Gastrocnemius medialis (tissue), 4 donors: ENCODE measurements at regions of chr17 and their contacts with region 1.

Region 1: GRCh38 chr17:51585514-51586104 is 325.3 kb downstream of the UTP18 start:
- DNase-seq: peak; percentile 3 to 12
- ATAC-seq: peak; percentile 39
- H3K4me3 ChIP-seq: no peak overlapping the region
- H3K27ac ChIP-seq: no peak overlapping the region
- H3K4me1 ChIP-seq: peaks cover 0 to 3% of the 10 kb centered on the region in 2 donors
- H3K27me3 ChIP-seq: no peaks in the 10 kb centered on the region
- CTCF ChIP-seq: peak; percentile 38 to 64 (median 53)
- POLR2A ChIP-seq: no peak

Region 2: GRCh38 chr17:51516924-51517323 is 68.7 kb before region 1 on chr17:
- in situ Hi-C with region 1: no loop called
- intact Hi-C with region 1: no loop called
- DNase-seq: no peak
- ATAC-seq: no peak
- H3K4me3 ChIP-seq: no peak overlapping the region
- H3K27ac ChIP-seq: no peak overlapping the region
- H3K4me1 ChIP-seq: no peaks in the 10 kb centered on the region
- H3K27me3 ChIP-seq: no peaks in the 10 kb centered on the region
- CTCF ChIP-seq: no peak
- POLR2A ChIP-seq: no peak

Region 3: GRCh38 chr17:51640108-51640622 is 54.6 kb after region 1 on chr17:
- in situ Hi-C with region 1: loop called in 2 of 4 experiments (anchors 5 to 10 kb)
- intact Hi-C with region 1: loop called (anchors 1 kb)
- DNase-seq: no peak
- ATAC-seq: peak in 1 of 2 donors; percentile 56
- H3K4me3 ChIP-seq: no peak overlapping the region
- H3K27ac ChIP-seq: no peak overlapping the region
- H3K4me1 ChIP-seq: peaks cover under 1 to 3% of the 10 kb centered on the region in 2 donors
- H3K27me3 ChIP-seq: no peaks in the 10 kb centered on the region
- CTCF ChIP-seq: peak; percentile 38 to 60 (median 52)
- POLR2A ChIP-seq: no peak

Region 4: DNA sequence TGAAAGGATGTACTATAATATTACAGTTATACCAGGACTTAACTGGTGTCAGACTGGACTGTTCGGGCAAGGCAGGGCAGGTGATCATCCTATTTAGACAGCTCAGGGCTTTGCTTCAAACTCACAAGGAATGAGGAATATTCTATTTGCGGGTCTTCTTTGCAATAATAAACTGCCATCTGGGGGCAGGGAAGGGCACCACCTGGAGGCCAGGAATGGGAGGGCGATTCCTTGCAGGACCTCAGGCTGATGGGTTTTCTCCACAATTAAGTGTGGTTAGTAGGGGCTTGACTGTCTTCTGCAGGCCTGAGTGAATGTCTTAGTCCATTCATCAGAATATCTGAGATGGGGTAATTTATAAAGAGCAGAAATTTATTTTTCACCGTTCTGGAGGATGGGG is 148.9 kb after region 1 on chr17:
- in situ Hi-C with region 1: no loop called
- intact Hi-C with region 1: loop called (anchors 5 kb)
- DNase-seq: no peak
- ATAC-seq: no peak
- H3K4me3 ChIP-seq: no peak overlapping the region
- H3K27ac ChIP-seq: no peak overlapping the region
- H3K4me1 ChIP-seq: no peaks in the 10 kb centered on the region
- H3K27me3 ChIP-seq: no peaks in the 10 kb centered on the region
- CTCF ChIP-seq: peak in 4 of 5 experiments; percentile 18 to 52 (median 42)
- POLR2A ChIP-seq: no peak